GM12878 (cell line): ENCODE measurements at regions of chr6 and their contacts with region 1.

Region 1: GRCh38 chr6:170516783-170517616 is 36.1 kb downstream of the PSMB1 start:
- DNase-seq: no peak
- ATAC-seq: peak; percentile 99
- H3K4me3 ChIP-seq: no peak overlapping the region
- H3K27ac ChIP-seq: no peak overlapping the region
- H3K4me1 ChIP-seq: no peaks in the 10 kb centered on the region
- H3K27me3 ChIP-seq: no peaks in the 10 kb centered on the region
- CTCF ChIP-seq: peak; percentile 77 to 86 (median 80)
- EP300 ChIP-seq: no peak
- POLR2A ChIP-seq: no peak
- RAD21 ChIP-seq: peak; percentile 95

Region 2: DNA sequence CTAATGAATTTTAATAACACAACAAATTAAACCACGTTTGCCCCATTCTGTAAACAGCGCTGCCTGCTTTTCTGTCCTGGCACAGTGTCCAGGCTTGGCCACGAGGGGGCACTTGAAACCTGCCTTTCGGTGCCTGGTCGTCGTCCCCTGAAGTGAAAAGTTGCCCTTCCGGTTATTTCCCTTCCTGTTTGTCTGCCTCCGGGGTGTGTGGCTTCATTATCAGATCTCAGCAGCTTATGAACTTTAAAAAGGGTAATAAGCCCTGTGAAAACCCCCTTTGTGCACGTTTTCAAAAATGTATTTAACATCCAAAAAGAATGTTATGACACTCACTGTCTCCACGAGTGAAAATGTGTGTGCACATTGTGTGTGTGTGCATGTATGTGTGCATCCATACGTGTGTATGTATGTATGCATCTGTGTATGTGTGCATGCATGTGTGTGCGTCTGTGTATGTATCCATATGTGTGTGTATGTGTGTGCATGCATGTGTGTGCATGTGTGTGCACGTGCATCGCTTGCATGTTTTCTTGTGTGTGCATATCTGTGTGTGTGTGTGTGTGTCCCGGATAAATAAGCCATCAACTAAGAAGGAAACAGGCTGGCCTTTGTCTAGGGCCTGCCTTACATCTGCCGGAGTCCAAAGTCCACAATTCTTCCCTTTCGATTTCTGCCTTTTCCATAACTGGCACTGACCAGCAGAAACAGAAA is 1621.7 kb before region 1 on chr6:
- CTCF ChIA-PET with region 1: no interaction called
- POLR2A ChIA-PET with region 1: no interaction called
- RAD21 ChIA-PET with region 1: interaction called, 3 read pairs
- SMC1A ChIA-PET with region 1: no interaction called
- in situ Hi-C with region 1: no loop called
- intact Hi-C with region 1: loop called (anchors 1 kb)
- DNase-seq: peak; percentile 5
- ATAC-seq: peak; percentile 94
- H3K4me3 ChIP-seq: no peak overlapping the region; the same call in 1 of the 2 replicates
- H3K27ac ChIP-seq: no peak overlapping the region
- H3K4me1 ChIP-seq: no peaks in the 10 kb centered on the region
- H3K27me3 ChIP-seq: no peaks in the 10 kb centered on the region
- CTCF ChIP-seq: peak; percentile 75 to 96 (median 80)
- EP300 ChIP-seq: no peak
- POLR2A ChIP-seq: no peak
- RAD21 ChIP-seq: peak; percentile 86

Region 3: GRCh38 chr6:169789982-169790927 is 726.7 kb before region 1 on chr6:
- CTCF ChIA-PET with region 1: interaction called, 7 read pairs
- POLR2A ChIA-PET with region 1: no interaction called
- RAD21 ChIA-PET with region 1: interaction called, 10 read pairs
- SMC1A ChIA-PET with region 1: interaction called, 3 read pairs
- in situ Hi-C with region 1: loop called (anchors 5 kb)
- intact Hi-C with region 1: loop called (anchors 2 kb)
- DNase-seq: no peak
- ATAC-seq: peak; percentile 98
- H3K4me3 ChIP-seq: peak overlapping the region; percentile 45; the same call in 1 of the 2 replicates
- H3K27ac ChIP-seq: no peak overlapping the region
- H3K4me1 ChIP-seq: peaks cover 4% of the 10 kb centered on the region; the same call in 1 of the 2 replicates
- H3K27me3 ChIP-seq: peaks cover 3 to 4% of the 10 kb centered on the region in 2 experiments
- CTCF ChIP-seq: peak; percentile 89 to 96 (median 93)
- EP300 ChIP-seq: no peak
- POLR2A ChIP-seq: no peak
- RAD21 ChIP-seq: peak; percentile 87

Region 4: DNA sequence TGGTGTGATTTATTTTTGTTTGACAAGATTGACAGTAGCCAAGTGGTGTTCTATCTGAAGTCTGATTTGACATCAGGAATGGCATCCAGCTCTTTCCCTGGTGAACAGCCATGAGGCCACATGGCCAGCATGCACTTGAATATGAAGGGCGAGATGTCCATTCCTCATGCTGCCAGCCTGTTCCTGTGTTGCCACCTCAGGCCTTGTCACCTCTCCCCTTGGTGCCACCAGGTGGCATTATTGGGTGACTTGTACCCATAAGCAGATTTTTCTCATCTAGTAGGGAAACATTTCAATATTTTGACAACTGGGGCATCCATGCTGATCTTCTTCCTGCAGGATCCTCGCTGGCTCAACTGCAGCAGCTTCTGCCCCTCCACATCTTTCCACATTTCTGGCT is 566.4 kb before region 1 on chr6:
- CTCF ChIA-PET with region 1: interaction called, 6 read pairs
- POLR2A ChIA-PET with region 1: no interaction called
- RAD21 ChIA-PET with region 1: interaction called, 4 read pairs
- SMC1A ChIA-PET with region 1: interaction called, 11 read pairs
- in situ Hi-C with region 1: no loop called
- intact Hi-C with region 1: loop called (anchors 5 kb)
- DNase-seq: no peak
- ATAC-seq: peak; percentile 38; the same call in 1 of the 3 replicates
- H3K4me3 ChIP-seq: no peak overlapping the region
- H3K27ac ChIP-seq: no peak overlapping the region
- H3K4me1 ChIP-seq: no peaks in the 10 kb centered on the region
- H3K27me3 ChIP-seq: no peaks in the 10 kb centered on the region
- CTCF ChIP-seq: peak; percentile 23 to 28 (median 26); a peak in 4 of 6 replicates
- EP300 ChIP-seq: no peak
- POLR2A ChIP-seq: no peak
- RAD21 ChIP-seq: peak; percentile 23; the same call in 1 of the 2 replicates

Region 5: GRCh38 chr6:170429450-170429849 is 87.5 kb before region 1 on chr6:
- CTCF ChIA-PET with region 1: interaction called, 12 read pairs
- POLR2A ChIA-PET with region 1: no interaction called
- RAD21 ChIA-PET with region 1: interaction called, 7 read pairs
- SMC1A ChIA-PET with region 1: interaction called, 6 read pairs
- in situ Hi-C with region 1: no loop called
- intact Hi-C with region 1: no loop called
- DNase-seq: no peak
- ATAC-seq: no peak
- H3K4me3 ChIP-seq: no peak overlapping the region
- H3K27ac ChIP-seq: no peak overlapping the region
- H3K4me1 ChIP-seq: no peaks in the 10 kb centered on the region
- H3K27me3 ChIP-seq: no peaks in the 10 kb centered on the region
- CTCF ChIP-seq: no peak
- EP300 ChIP-seq: no peak
- POLR2A ChIP-seq: no peak
- RAD21 ChIP-seq: no peak

Region 6: GRCh38 chr6:170476360-170476759 is 40.6 kb before region 1 on chr6:
- CTCF ChIA-PET with region 1: interaction called, 7 read pairs
- POLR2A ChIA-PET with region 1: no interaction called
- RAD21 ChIA-PET with region 1: interaction called, 10 read pairs
- SMC1A ChIA-PET with region 1: interaction called, 13 read pairs
- in situ Hi-C with region 1: no loop called
- intact Hi-C with region 1: no loop called
- DNase-seq: peak; percentile 40
- ATAC-seq: peak; percentile 92
- H3K4me3 ChIP-seq: no peak overlapping the region
- H3K27ac ChIP-seq: no peak overlapping the region
- H3K4me1 ChIP-seq: no peaks in the 10 kb centered on the region
- H3K27me3 ChIP-seq: no peaks in the 10 kb centered on the region; a peak in 1 of 4 replicates
- CTCF ChIP-seq: no peak
- EP300 ChIP-seq: peak; percentile 36 to 53; a peak in 2 of 4 replicates
- POLR2A ChIP-seq: no peak
- RAD21 ChIP-seq: no peak

Region 7: GRCh38 chr6:170584181-170584953 is 67.4 kb after region 1 on chr6 and contains the start of gene PDCD2:
- CTCF ChIA-PET with region 1: no interaction called
- POLR2A ChIA-PET with region 1: no interaction called
- RAD21 ChIA-PET with region 1: no interaction called
- SMC1A ChIA-PET with region 1: no interaction called
- in situ Hi-C with region 1: no loop called
- intact Hi-C with region 1: no loop called
- DNase-seq: peak; percentile 54
- ATAC-seq: peak; percentile 97
- H3K4me3 ChIP-seq: peak within 1 kb of the TSS; percentile 100
- H3K27ac ChIP-seq: peak within 1 kb of the TSS; percentile 66
- H3K4me1 ChIP-seq: peaks cover 6% of the 10 kb centered on the region; the same call in 1 of the 2 replicates
- H3K27me3 ChIP-seq: no peaks in the 10 kb centered on the region
- CTCF ChIP-seq: no peak
- EP300 ChIP-seq: no peak
- POLR2A ChIP-seq: peak; percentile 93
- RAD21 ChIP-seq: no peak
- polyA plus RNA-seq, gene PDCD2: 27.4 to 57.3 TPM